K562 (cell line): ENCODE measurements at regions of chr19 and their contacts with region 1.

Region 1: DNA sequence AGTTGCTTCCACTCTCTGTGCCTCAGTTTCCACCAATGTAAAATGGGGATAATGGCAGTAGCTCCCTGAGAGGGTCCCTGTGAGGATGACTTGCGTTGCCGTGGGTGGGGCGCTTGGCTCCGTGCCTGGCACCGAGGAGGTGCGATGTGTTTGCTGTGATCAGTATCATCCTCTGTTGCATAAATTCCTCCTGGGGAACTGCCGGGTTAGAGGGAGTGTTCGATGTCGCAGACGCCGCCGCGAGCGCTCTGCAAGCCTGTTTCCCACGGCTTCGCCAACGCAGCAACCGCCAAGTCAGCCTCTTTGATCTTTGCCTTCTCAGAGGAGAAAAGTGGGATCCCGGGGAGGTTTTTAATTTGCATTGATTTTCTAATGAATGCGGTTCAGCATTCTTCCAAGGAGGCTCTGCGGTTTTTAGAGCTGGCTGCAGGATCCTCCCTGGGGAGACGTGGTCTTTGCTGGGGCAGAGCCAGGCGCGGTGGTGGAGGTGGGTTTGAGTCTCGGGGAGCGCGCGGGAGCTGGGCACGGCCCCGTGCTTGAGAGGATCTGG is 7.6 kb downstream of the GPR32 start:
- DNase-seq: peak in 1 of 4 experiments; percentile 55
- ATAC-seq: peak; percentile 59
- H3K4me3 ChIP-seq: 0 out of 2 replicates have a peak overlapping the region, but pooled peaks have one; percentile 4
- H3K27ac ChIP-seq: no peak overlapping the region
- H3K4me1 ChIP-seq: peaks cover 25 to 31% of the 10 kb centered on the region in 2 experiments; a peak in 4 of 5 replicates
- H3K27me3 ChIP-seq: no peaks in the 10 kb centered on the region
- CTCF ChIP-seq: no peak
- EP300 ChIP-seq: no peak
- POLR2A ChIP-seq: no peak
- RAD21 ChIP-seq: no peak

Region 2: GRCh38 chr19:50531118-50531612 is 246.7 kb before region 1 on chr19:
- CTCF ChIA-PET with region 1: no interaction called
- POLR2A ChIA-PET with region 1: no interaction called
- in situ Hi-C with region 1: loop called (anchors 5 kb)
- intact Hi-C with region 1: no loop called
- DNase-seq: peak in 2 of 4 experiments; percentile 34 to 40
- ATAC-seq: peak; percentile 53; the same call in 2 of the 3 replicates
- H3K4me3 ChIP-seq: no peak overlapping the region
- H3K27ac ChIP-seq: no peak overlapping the region
- H3K4me1 ChIP-seq: peaks cover 0 to 10% of the 10 kb centered on the region in 2 experiments; a peak in 2 of 5 replicates
- H3K27me3 ChIP-seq: peaks cover 3 to 22% of the 10 kb centered on the region in 2 experiments; a peak in 3 of 5 replicates
- CTCF ChIP-seq: no peak
- EP300 ChIP-seq: no peak
- POLR2A ChIP-seq: no peak
- RAD21 ChIP-seq: no peak

Region 3: DNA sequence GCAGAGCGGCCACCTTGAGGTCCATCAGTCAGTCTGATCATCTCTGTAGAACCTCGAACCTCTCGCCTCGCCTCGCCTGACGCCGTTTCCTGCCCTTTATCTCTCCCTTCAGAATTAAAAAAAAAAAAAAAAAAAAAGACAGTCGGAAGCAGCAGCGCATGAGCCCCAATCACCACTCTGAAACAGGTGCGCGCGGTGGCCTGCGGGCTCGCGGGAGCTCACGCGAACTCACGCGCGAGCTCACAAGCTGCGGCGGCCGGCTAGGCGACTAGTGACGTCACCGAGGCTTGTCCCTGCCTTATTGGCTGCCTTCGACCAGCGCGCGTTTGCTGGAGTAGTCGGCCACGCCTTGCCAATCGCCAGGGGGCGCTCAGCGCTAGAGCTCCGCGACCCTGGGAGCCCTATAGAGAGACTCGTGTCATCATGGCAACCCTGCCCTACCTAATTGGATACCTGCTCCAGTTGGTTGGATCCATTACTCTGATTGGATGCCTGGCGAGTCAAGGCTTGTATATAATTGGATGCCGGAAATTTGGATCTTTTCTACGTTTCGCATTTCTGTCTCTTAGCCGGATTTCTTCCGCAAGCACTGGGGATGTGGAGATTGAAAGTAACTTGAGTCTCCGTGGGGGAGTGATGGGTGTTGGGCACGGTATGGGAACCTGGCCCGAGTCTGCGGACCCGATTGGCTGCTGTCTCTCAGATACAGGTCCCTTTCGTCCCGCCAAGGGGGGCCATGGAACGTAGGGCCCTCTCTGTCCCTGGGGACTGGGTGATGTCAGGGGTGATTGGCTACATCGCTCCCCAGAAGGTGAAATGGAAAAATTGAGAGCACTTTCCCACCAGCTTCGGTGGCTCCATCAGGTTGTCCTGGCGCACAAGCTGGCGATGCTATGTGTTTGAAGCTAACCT is 169.7 kb before region 1 on chr19:
- CTCF ChIA-PET with region 1: no interaction called
- POLR2A ChIA-PET with region 1: no interaction called
- in situ Hi-C with region 1: no loop called
- intact Hi-C with region 1: loop called (anchors 5 kb)
- DNase-seq: peak; percentile 91 to 99 (median 93)
- ATAC-seq: peak; percentile 93
- H3K4me3 ChIP-seq: no peak overlapping the region
- H3K27ac ChIP-seq: no peak overlapping the region
- H3K4me1 ChIP-seq: peaks cover 2 to 21% of the 10 kb centered on the region in 2 experiments
- H3K27me3 ChIP-seq: no peaks in the 10 kb centered on the region
- CTCF ChIP-seq: peak; percentile 92 to 98 (median 94)
- EP300 ChIP-seq: no peak
- POLR2A ChIP-seq: no peak; the same call in 1 of the 2 replicates
- RAD21 ChIP-seq: peak; percentile 90 to 92

Region 4: GRCh38 chr19:50724522-50725217 is 53.2 kb before region 1 on chr19:
- CTCF ChIA-PET with region 1: interaction called, 91 read pairs
- POLR2A ChIA-PET with region 1: interaction called, 10 read pairs
- in situ Hi-C with region 1: no loop called
- intact Hi-C with region 1: loop called (anchors 1 kb)
- DNase-seq: peak; percentile 98 to 100 (median 99)
- ATAC-seq: peak; percentile 86
- H3K4me3 ChIP-seq: peak overlapping the region; percentile 59
- H3K27ac ChIP-seq: peak overlapping the region; percentile 80
- H3K4me1 ChIP-seq: peaks cover 33 to 67% of the 10 kb centered on the region in 2 experiments; a peak in 4 of 5 replicates
- H3K27me3 ChIP-seq: no peaks in the 10 kb centered on the region
- CTCF ChIP-seq: peak; percentile 87 to 96 (median 91)
- EP300 ChIP-seq: no peak
- POLR2A ChIP-seq: peak; percentile 86
- RAD21 ChIP-seq: peak; percentile 82 to 83

Region 5: DNA sequence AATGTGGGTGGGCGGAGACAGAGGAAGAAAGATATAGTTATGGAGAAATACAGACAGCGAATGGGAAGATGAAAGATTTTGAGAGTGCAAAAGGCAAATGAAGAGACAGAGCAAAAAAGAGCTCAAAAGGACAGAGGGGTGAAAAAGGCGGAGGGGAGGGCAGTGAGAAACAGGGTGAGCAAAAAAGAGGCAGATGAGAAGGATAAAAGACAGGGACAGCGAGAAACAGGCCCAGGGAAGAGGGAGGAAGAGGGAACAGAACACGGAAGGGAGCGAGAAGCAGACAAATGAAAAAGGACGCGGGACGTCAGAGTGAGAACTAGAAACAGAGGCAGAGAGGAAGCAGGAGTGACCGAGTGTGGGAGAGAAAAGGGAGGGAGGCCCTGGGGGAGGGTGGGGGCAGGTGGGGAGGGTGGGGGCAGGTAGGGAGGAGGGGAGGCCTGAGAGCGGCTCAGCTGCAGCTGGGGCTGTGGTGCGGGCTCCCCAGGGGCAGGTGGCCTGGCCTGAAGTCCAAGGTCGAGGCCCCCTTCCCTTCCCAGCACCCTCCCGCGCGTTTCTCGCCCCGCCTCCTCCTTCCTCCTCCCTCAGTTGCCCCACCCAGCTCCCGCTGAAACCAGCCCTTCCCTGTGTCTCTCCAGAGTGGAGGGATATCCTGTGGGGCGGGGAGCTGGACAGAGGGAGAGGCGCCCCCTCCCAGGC is 42.9 kb after region 1 on chr19:
- CTCF ChIA-PET with region 1: no interaction called
- POLR2A ChIA-PET with region 1: no interaction called
- in situ Hi-C with region 1: no loop called
- intact Hi-C with region 1: no loop called
- DNase-seq: peak; percentile 78 to 87 (median 85)
- ATAC-seq: peak; percentile 57
- H3K4me3 ChIP-seq: peak overlapping the region; percentile 25; the same call in 1 of the 2 replicates
- H3K27ac ChIP-seq: peak overlapping the region; percentile 74
- H3K4me1 ChIP-seq: peaks cover 57 to 77% of the 10 kb centered on the region in 2 experiments
- H3K27me3 ChIP-seq: no peaks in the 10 kb centered on the region
- CTCF ChIP-seq: no peak
- EP300 ChIP-seq: no peak
- POLR2A ChIP-seq: 0 out of 2 replicates have a peak, but pooled peaks have one; percentile 37
- RAD21 ChIP-seq: no peak